WTC11 (cell line): ENCODE measurements at regions of chr22 and their contacts with region 1.

Region 1: GRCh38 chr22:24805790-24806662 is at the start of gene SGSM1:
- DNase-seq: peak; percentile 88
- ATAC-seq: peak; percentile 78
- H3K4me3 Mint-ChIP-seq: peak within 1 kb of the TSS; percentile 77
- H3K27ac Mint-ChIP-seq: no peak within 1 kb of the TSS
- H3K4me1 Mint-ChIP-seq: peaks cover 15% of the 10 kb centered on the region
- H3K27me3 Mint-ChIP-seq: no peaks in the 10 kb centered on the region; the same call in 1 of the 2 replicates
- CTCF ChIP-seq: no peak
- total RNA-seq, gene SGSM1: 4.1 to 6.5 TPM (median 6.5 TPM) in 3 replicates

Region 2: DNA sequence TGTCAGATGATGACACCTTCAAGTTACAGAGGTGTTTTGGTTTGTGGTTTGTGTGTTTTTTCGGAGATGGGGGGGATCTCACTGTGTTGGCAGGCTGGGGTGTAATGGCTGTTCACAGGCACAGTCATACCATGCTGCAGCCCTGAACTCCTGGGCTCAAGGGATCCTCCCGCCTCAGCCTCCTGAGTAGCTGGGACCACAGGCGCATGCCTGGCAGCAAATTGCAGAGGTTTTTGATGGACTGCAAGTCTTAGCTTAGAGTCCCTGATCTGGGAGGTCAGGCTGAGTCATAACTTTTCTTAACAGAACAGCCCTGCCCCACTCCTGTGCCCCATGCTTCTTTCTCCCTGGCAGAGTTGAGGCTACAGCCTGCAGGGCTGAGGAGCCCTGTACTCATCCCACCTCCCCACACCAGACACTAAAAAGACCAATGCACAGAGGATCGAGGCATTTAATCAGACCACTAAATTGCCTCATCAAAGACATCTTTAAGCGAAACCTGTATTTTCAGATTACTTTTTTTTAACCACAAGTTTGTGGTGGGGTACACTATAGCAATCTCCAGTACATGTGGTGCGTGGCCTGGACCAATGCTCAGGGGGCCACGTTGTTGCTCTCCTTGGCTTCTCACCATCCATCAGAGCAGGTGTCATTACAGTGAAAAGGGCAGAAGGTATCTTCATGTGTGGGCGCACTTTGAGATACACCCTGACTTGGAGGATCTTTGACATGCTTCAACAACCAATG is 395.7 kb before region 1 on chr22:
- CTCF ChIA-PET with region 1: no interaction called
- POLR2A ChIA-PET with region 1: no interaction called
- DNase-seq: no peak
- ATAC-seq: no peak
- H3K4me3 Mint-ChIP-seq: no peak overlapping the region
- H3K27ac Mint-ChIP-seq: peak overlapping the region; percentile 77; the same call in 1 of the 2 replicates
- H3K4me1 Mint-ChIP-seq: peaks cover 25% of the 10 kb centered on the region
- H3K27me3 Mint-ChIP-seq: no peaks in the 10 kb centered on the region
- CTCF ChIP-seq: no peak

Region 3: GRCh38 chr22:24775754-24776492 is 30.1 kb before region 1 on chr22:
- CTCF ChIA-PET with region 1: interaction called, 22 read pairs
- POLR2A ChIA-PET with region 1: no interaction called
- DNase-seq: no peak
- ATAC-seq: no peak
- H3K4me3 Mint-ChIP-seq: no peak overlapping the region
- H3K27ac Mint-ChIP-seq: peak overlapping the region; percentile 28; the same call in 1 of the 2 replicates
- H3K4me1 Mint-ChIP-seq: peaks cover 14% of the 10 kb centered on the region
- H3K27me3 Mint-ChIP-seq: no peaks in the 10 kb centered on the region; the same call in 1 of the 2 replicates
- CTCF ChIP-seq: no peak

Region 4: DNA sequence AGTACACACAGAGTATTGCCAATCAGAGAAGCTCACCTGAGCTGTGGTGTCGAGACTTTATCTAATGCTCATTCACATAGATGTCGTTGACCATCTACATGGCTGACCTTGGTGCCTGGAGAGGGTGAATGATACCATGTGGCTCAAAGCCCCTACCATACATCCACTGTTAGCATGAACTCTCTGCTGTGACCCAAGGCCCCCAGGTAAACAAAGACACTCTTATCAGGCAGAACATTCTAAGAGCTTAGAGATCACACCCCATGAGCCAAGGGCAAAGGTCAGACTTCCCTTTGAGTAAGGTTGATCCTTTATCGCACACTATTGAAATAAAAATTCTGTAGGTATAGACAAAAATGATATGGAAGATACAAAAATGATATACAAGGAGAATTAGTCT is 16.5 kb before region 1 on chr22:
- CTCF ChIA-PET with region 1: interaction called, 12 read pairs
- POLR2A ChIA-PET with region 1: no interaction called
- DNase-seq: no peak
- ATAC-seq: no peak
- H3K4me3 Mint-ChIP-seq: no peak overlapping the region
- H3K27ac Mint-ChIP-seq: no peak overlapping the region
- H3K4me1 Mint-ChIP-seq: no peaks in the 10 kb centered on the region
- H3K27me3 Mint-ChIP-seq: peaks cover 3% of the 10 kb centered on the region; the same call in 1 of the 2 replicates
- CTCF ChIP-seq: no peak

Region 5: GRCh38 chr22:24816806-24817205 is 10.8 kb after region 1 on chr22:
- CTCF ChIA-PET with region 1: interaction called, 14 read pairs
- POLR2A ChIA-PET with region 1: no interaction called
- DNase-seq: no peak
- ATAC-seq: no peak
- H3K4me3 Mint-ChIP-seq: no peak overlapping the region
- H3K27ac Mint-ChIP-seq: no peak overlapping the region
- H3K4me1 Mint-ChIP-seq: peaks cover 3% of the 10 kb centered on the region; the same call in 1 of the 2 replicates
- H3K27me3 Mint-ChIP-seq: no peaks in the 10 kb centered on the region
- CTCF ChIP-seq: no peak

Region 6: GRCh38 chr22:24845041-24845898 is 39.2 kb after region 1 on chr22:
- CTCF ChIA-PET with region 1: interaction called, 14 read pairs
- POLR2A ChIA-PET with region 1: no interaction called
- DNase-seq: no peak
- ATAC-seq: no peak
- H3K4me3 Mint-ChIP-seq: no peak overlapping the region
- H3K27ac Mint-ChIP-seq: no peak overlapping the region
- H3K4me1 Mint-ChIP-seq: peaks cover 2% of the 10 kb centered on the region; the same call in 1 of the 2 replicates
- H3K27me3 Mint-ChIP-seq: no peaks in the 10 kb centered on the region; the same call in 1 of the 2 replicates
- CTCF ChIP-seq: no peak

Region 7: DNA sequence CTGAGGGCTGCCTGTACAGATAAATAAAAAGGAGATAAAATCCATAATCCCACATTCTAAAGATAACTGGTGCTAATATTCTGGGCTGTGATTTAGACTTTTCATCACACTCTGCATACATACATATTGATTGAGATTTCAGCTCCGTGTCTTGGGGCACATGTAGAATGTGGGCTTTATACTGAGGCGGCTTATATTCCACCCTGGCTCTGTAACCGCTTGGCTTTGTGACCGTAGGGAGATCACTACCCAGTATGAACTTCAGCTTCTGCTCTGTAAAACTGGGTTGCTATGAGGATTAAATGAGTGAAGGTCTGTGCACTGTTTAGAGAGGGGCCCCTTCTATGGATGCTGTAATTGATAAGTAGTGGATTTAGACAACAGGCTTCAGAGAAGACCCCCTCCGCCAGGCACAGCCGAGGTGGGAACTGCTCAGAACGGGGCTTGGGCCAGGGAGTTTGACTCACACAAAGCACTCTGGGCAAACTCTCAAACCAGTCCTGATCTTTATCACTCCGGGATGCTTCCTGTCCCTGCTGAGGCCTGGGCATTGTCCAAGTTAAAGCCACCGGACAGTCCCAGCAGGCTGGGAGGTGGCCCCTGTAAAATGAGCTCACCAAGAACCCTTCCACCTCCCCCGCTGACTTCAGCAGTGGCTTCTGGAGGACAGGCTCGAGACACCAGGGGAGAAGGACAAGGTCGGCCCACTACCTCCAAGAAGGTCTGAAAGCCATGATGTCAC is 163.7 kb after region 1 on chr22:
- CTCF ChIA-PET with region 1: no interaction called
- POLR2A ChIA-PET with region 1: no interaction called
- DNase-seq: no peak
- ATAC-seq: peak; percentile 11
- H3K4me3 Mint-ChIP-seq: no peak overlapping the region
- H3K27ac Mint-ChIP-seq: peak overlapping the region; percentile 97
- H3K4me1 Mint-ChIP-seq: peaks cover 51% of the 10 kb centered on the region
- H3K27me3 Mint-ChIP-seq: no peaks in the 10 kb centered on the region
- CTCF ChIP-seq: no peak